ENCODE measurements at regions of chr1 and their contacts with region 1.

Region 1: GRCh38 chr1:109773146-109773899 is 9.6 kb upstream of the EPS8L3 start:
- DNase-seq: no peak
- H3K4me3 ChIP-seq: no peak overlapping the region
- H3K27ac ChIP-seq: no peak overlapping the region
- H3K4me1 ChIP-seq: no peaks in the 10 kb centered on the region
- H3K27me3 ChIP-seq: no peaks in the 10 kb centered on the region
- CTCF ChIP-seq: peak; percentile 56 to 89 (median 78)
- POLR2A ChIP-seq: no peak

Region 2: DNA sequence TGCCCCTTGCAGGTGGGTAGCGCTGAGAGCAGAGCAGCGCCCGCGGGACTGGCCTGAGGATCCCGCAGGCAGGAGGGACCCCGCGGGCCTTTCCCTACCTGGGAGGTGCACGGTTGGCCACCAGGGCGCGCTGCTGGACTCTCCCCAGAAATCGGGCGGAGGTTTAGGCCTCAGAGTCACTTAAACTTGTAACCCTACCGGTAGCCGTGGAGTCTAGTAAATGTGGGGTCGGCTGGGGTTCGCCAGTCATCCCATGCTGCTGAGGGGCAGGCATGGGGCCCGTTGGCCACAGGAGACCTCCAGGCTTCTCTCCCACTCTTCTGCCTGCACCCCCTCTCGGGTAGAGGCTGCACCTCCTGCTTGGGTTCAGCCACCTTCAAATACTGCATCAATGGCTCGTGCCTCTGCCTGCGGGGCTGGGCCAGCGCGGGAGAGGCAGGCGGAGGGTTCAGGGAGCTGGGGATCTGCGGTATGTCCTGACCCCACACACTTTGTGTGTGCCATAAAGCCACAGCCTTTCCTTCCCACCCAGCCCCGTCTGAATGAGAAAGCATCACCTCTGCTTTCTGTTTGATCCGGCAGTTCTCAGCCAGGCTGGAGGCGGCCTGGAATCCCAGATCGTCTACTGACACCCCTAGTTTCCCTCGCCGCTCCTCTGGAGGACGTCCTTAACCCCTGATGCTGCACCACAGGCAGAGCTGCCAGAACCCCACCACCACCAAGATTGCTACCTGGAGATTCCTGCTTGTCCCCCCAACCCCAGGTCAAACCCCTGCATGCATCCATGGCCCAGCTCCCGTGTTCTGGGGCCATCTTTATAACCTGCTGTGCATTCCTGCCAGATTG is 129.7 kb before region 1 on chr1:
- intact Hi-C with region 1: loop called (anchors 5 kb)
- DNase-seq: peak in 1 of 2 donors; percentile 87
- H3K4me3 ChIP-seq: no peak overlapping the region
- H3K27ac ChIP-seq: no peak overlapping the region
- H3K4me1 ChIP-seq: peaks cover 22% of the 10 kb centered on the region
- H3K27me3 ChIP-seq: no peaks in the 10 kb centered on the region
- CTCF ChIP-seq: peak; percentile 51 to 80 (median 70)
- POLR2A ChIP-seq: no peak

Region 3: DNA sequence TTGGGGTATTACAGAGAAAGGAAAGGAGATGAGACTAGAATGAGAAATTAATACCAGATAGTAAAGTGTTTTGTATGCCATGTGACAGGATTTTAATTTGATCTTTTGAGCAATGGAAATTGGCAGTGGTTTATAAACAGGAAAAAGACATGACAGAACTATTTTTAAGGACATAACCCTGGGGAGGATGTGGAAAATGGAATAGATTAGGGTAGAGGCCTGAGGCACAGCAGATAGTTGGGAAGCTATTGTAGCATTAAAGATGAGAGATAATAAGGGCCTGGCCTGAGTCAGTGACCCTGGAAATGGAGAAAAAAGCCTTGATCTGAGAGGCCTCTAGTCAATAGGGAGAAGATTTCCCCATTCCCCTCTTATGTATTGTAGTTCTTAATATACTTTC is 923.5 kb after region 1 on chr1:
- intact Hi-C with region 1: no loop called
- DNase-seq: no peak
- H3K4me3 ChIP-seq: no peak overlapping the region
- H3K27ac ChIP-seq: no peak overlapping the region
- H3K4me1 ChIP-seq: no peaks in the 10 kb centered on the region
- H3K27me3 ChIP-seq: no peaks in the 10 kb centered on the region
- CTCF ChIP-seq: no peak
- POLR2A ChIP-seq: no peak